ENCODE measurements at regions of chr12 and their contacts with region 1.

Region 1: DNA sequence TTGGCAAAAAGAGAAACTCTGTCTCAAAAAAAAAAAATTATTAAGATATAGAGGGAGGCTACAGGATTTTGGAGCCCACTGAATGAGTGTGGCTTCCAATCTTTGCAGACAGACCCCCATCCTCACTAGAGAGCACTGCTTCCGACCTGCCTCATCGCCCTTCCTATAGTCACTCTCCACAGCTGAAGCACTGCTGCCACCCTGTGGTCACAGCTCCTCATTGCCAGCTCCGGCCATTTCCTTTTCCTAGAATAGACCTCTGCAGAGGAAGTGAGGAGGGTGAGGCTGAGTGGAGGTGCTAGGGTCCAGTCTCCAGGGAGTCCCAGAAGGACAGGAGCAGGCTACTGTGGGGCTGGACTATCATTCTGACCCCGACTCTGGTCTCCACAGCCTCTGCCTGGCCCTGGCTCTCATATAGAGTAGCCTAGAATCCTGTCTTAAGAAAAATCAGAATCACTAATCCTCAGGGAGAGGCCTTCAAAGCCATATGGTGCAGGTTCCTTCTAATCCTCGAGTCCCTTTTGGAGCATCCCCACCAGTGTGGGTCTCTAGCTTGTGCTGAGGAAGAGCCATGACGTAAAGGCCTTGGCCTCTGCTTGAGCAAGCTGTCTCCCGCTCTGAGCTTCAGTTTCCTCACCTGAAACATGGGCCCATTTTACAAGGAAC is 1.4 kb upstream of the NPFF start:
- DNase-seq: peak; percentile 69 to 78 (median 75)
- H3K4me3 ChIP-seq: no peak overlapping the region
- H3K4me3 Mint-ChIP-seq: peak overlapping the region in 1 of 8 donors; percentile 2
- H3K27ac ChIP-seq: peak overlapping the region; percentile 16
- H3K27ac Mint-ChIP-seq: peak overlapping the region; percentile 14 to 70 (median 47)
- H3K4me1 ChIP-seq: peaks cover 10% of the 10 kb centered on the region
- H3K4me1 Mint-ChIP-seq: peaks cover 5 to 16% (median 8%) of the 10 kb centered on the region in 4 donors
- H3K27me3 ChIP-seq: no peaks in the 10 kb centered on the region
- H3K27me3 Mint-ChIP-seq: no peaks in the 10 kb centered on the region

Region 2: GRCh38 chr12:53220801-53221202 is 287.9 kb before region 1 on chr12:
- CTCF ChIA-PET with region 1: no interaction called
- POLR2A ChIA-PET with region 1: no interaction called
- intact Hi-C with region 1: no loop called
- DNase-seq: peak; percentile 60 to 85 (median 65)
- H3K4me3 ChIP-seq: peak overlapping the region; percentile 73 to 82
- H3K4me3 Mint-ChIP-seq: peak overlapping the region; percentile 95 to 99 (median 98)
- H3K27ac ChIP-seq: peak overlapping the region; percentile 98
- H3K27ac Mint-ChIP-seq: peak overlapping the region; percentile 93 to 99 (median 97)
- H3K4me1 ChIP-seq: peaks cover 78% of the 10 kb centered on the region
- H3K4me1 Mint-ChIP-seq: peaks cover 63 to 93% (median 72%) of the 10 kb centered on the region in 4 donors
- H3K27me3 ChIP-seq: no peaks in the 10 kb centered on the region
- H3K27me3 Mint-ChIP-seq: no peaks in the 10 kb centered on the region

Region 3: GRCh38 chr12:53344824-53345485 is 163.7 kb before region 1 on chr12:
- CTCF ChIA-PET with region 1: interaction called, 19 read pairs
- POLR2A ChIA-PET with region 1: interaction called, 3 read pairs
- intact Hi-C with region 1: no loop called
- DNase-seq: peak; percentile 62 to 66 (median 65)
- H3K4me3 ChIP-seq: peak overlapping the region in 1 of 2 donors; percentile 73
- H3K4me3 Mint-ChIP-seq: peak overlapping the region; percentile 94 to 99 (median 98)
- H3K27ac ChIP-seq: peak overlapping the region; percentile 44
- H3K27ac Mint-ChIP-seq: peak overlapping the region; percentile 68 to 97 (median 94)
- H3K4me1 ChIP-seq: peaks cover 7% of the 10 kb centered on the region
- H3K4me1 Mint-ChIP-seq: peaks cover 11 to 18% (median 14%) of the 10 kb centered on the region in 4 donors
- H3K27me3 ChIP-seq: no peaks in the 10 kb centered on the region
- H3K27me3 Mint-ChIP-seq: no peaks in the 10 kb centered on the region

Region 4: GRCh38 chr12:53379389-53380103 is 129.1 kb before region 1 on chr12:
- CTCF ChIA-PET with region 1: interaction called, 10 read pairs
- POLR2A ChIA-PET with region 1: no interaction called
- intact Hi-C with region 1: no loop called
- DNase-seq: peak; percentile 99 to 100 (median 100)
- H3K4me3 ChIP-seq: peak overlapping the region; percentile 57 to 86
- H3K4me3 Mint-ChIP-seq: no peak overlapping the region
- H3K27ac ChIP-seq: peak overlapping the region; percentile 70
- H3K27ac Mint-ChIP-seq: no peak overlapping the region
- H3K4me1 ChIP-seq: peaks cover 46% of the 10 kb centered on the region
- H3K4me1 Mint-ChIP-seq: peaks cover 28 to 37% (median 34%) of the 10 kb centered on the region in 4 donors
- H3K27me3 ChIP-seq: no peaks in the 10 kb centered on the region
- H3K27me3 Mint-ChIP-seq: no peaks in the 10 kb centered on the region

Region 5: GRCh38 chr12:53424626-53425514 is 83.8 kb before region 1 on chr12:
- CTCF ChIA-PET with region 1: interaction called, 56 read pairs
- POLR2A ChIA-PET with region 1: interaction called, 5 read pairs
- intact Hi-C with region 1: loop called (anchors 1 kb)
- DNase-seq: no peak
- H3K4me3 ChIP-seq: no peak overlapping the region
- H3K4me3 Mint-ChIP-seq: no peak overlapping the region
- H3K27ac ChIP-seq: no peak overlapping the region
- H3K27ac Mint-ChIP-seq: no peak overlapping the region
- H3K4me1 ChIP-seq: peaks cover 5% of the 10 kb centered on the region
- H3K4me1 Mint-ChIP-seq: peaks cover 5 to 9% (median 6%) of the 10 kb centered on the region in 4 donors
- H3K27me3 ChIP-seq: no peaks in the 10 kb centered on the region
- H3K27me3 Mint-ChIP-seq: no peaks in the 10 kb centered on the region

Region 6: DNA sequence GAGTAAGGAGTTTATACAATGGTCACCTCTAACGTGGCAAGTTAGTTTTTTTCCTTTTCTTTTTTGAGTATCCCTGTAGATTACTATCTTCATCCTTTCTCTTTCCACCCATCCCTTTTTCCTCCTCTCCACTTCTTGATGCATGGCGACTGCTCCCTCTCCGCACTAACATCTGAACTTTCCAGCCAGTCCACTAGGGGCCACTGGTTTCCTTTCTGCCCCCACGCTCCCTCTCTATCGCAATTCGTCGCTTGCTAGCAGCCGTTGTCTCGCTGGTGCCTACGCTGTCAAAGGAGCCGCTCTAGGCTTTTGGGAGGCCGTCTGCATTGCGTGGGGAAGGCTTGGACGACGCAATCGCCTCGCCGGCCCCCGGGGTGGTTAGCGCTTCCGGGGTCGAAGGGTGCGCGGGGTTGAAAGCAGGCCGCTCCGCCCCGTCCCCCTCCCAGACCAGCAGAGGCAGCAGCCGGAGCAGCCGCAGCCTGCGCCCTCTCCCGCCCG is 57.0 kb before region 1 on chr12 and contains the start of gene PCBP2:
- CTCF ChIA-PET with region 1: interaction called, 7 read pairs
- POLR2A ChIA-PET with region 1: interaction called, 5 read pairs
- intact Hi-C with region 1: loop called (anchors 2 kb)
- DNase-seq: peak; percentile 97 to 99 (median 98)
- H3K4me3 ChIP-seq: peak within 1 kb of the TSS; percentile 58 to 61
- H3K4me3 Mint-ChIP-seq: peak within 1 kb of the TSS; percentile 95 to 100 (median 98)
- H3K27ac ChIP-seq: peak within 1 kb of the TSS; percentile 95
- H3K27ac Mint-ChIP-seq: peak within 1 kb of the TSS; percentile 98 to 100 (median 99)
- H3K4me1 ChIP-seq: peaks cover 34% of the 10 kb centered on the region
- H3K4me1 Mint-ChIP-seq: peaks cover 20 to 49% (median 31%) of the 10 kb centered on the region in 4 donors
- H3K27me3 ChIP-seq: no peaks in the 10 kb centered on the region
- H3K27me3 Mint-ChIP-seq: no peaks in the 10 kb centered on the region
- total RNA-seq, gene PCBP2: 848 to 858 TPM

Region 7: DNA sequence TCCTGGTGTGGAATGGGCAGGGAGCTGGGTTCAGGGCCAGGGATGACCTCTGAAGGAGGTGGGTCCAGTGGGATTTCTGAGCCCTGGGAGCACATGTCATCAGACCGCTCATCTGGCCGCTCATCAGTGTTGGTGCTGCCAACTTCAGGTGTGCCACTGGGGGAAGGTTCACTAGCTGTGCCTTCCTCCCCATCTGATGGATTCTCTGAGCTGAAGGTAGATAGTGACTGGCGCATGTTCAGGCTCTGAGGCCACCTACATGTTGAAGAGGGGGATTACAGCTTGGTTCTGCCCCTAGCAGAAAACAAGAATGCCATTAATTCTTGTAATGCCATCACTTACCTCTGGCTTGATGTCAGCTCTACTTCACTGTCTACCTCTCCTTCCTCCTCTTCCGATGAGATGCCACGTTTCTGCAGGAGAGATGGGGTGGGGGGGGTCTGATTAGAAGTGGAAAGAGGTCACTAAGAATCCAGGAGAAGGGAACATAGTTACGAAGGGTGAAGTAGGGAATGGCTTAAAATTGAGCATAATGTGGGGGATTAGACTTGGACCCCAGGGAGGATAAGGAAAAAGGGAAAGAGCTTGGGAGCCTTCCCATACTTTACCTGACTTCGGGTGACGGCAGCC is 26.6 kb before region 1 on chr12:
- CTCF ChIA-PET with region 1: interaction called, 74 read pairs
- POLR2A ChIA-PET with region 1: interaction called, 5 read pairs
- intact Hi-C with region 1: loop called (anchors 2 kb)
- DNase-seq: peak in 1 of 5 donors; percentile 23
- H3K4me3 ChIP-seq: no peak overlapping the region
- H3K4me3 Mint-ChIP-seq: no peak overlapping the region
- H3K27ac ChIP-seq: no peak overlapping the region
- H3K27ac Mint-ChIP-seq: peak overlapping the region in 5 of 7 donors; percentile 13 to 73 (median 48)
- H3K4me1 ChIP-seq: peaks cover 6% of the 10 kb centered on the region
- H3K4me1 Mint-ChIP-seq: peaks cover 2 to 12% (median 6%) of the 10 kb centered on the region in 4 donors
- H3K27me3 ChIP-seq: no peaks in the 10 kb centered on the region
- H3K27me3 Mint-ChIP-seq: no peaks in the 10 kb centered on the region

Region 8: GRCh38 chr12:53524476-53524875 is 15.8 kb after region 1 on chr12:
- CTCF ChIA-PET with region 1: interaction called, 12 read pairs
- POLR2A ChIA-PET with region 1: no interaction called
- intact Hi-C with region 1: no loop called
- DNase-seq: no peak
- H3K4me3 ChIP-seq: no peak overlapping the region
- H3K4me3 Mint-ChIP-seq: no peak overlapping the region
- H3K27ac ChIP-seq: no peak overlapping the region
- H3K27ac Mint-ChIP-seq: no peak overlapping the region
- H3K4me1 ChIP-seq: no peaks in the 10 kb centered on the region
- H3K4me1 Mint-ChIP-seq: peaks cover 0 to 1% (median 0%) of the 10 kb centered on the region in 4 donors
- H3K27me3 ChIP-seq: no peaks in the 10 kb centered on the region
- H3K27me3 Mint-ChIP-seq: no peaks in the 10 kb centered on the region

Measured in CD4-positive, alpha-beta memory T cell (primary cell).